Activated naive CD4-positive, alpha-beta T cell treated with anti-CD3 and anti-CD28 coated beads for 36 hours (primary cell): ENCODE measurements at regions of chr13 and their contacts with region 1.

Region 1: GRCh38 chr13:41054212-41054877 is 7.0 kb upstream of the WBP4 start:
- DNase-seq: peak; percentile 57
- H3K4me3 Mint-ChIP-seq: no peak overlapping the region
- H3K27ac Mint-ChIP-seq: no peak overlapping the region
- H3K4me1 Mint-ChIP-seq: peaks cover 65% of the 10 kb centered on the region
- H3K27me3 Mint-ChIP-seq: no peaks in the 10 kb centered on the region

Region 2: GRCh38 chr13:40974460-40975407 is 79.6 kb before region 1 on chr13:
- CTCF ChIA-PET with region 1: interaction called, 26 read pairs
- intact Hi-C with region 1: loop called (anchors 2 kb)
- DNase-seq: peak; percentile 63
- H3K4me3 Mint-ChIP-seq: peak overlapping the region; percentile 36
- H3K27ac Mint-ChIP-seq: peak overlapping the region; percentile 94
- H3K4me1 Mint-ChIP-seq: peaks cover 83% of the 10 kb centered on the region
- H3K27me3 Mint-ChIP-seq: no peaks in the 10 kb centered on the region

Region 3: DNA sequence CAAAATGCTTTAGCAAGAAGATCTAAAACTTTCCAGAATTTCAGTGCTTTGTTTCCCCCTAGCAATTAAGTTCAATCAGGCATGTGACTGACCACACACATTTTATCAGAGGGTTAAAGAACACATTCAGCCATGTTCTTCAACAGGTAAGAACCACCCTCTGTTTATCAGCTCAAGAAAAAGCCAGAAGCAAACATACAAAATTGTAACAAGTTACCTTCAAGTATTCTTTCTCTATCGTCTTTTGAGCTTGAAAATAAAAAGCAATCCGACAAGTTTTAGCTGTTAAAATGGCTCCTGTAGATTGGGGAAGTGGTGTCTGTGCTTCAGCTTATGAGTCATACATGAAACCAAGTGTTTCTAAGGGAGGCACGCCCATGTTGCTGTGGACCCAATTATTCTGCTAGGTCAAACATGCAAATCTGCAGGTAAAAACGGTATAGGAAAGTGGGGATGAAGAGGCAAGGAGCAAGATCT is 35.3 kb before region 1 on chr13 and contains the start of gene ELF1:
- CTCF ChIA-PET with region 1: interaction called, 25 read pairs
- intact Hi-C with region 1: loop called (anchors 1 kb)
- DNase-seq: peak; percentile 67
- H3K4me3 Mint-ChIP-seq: peak within 1 kb of the TSS; percentile 89
- H3K27ac Mint-ChIP-seq: peak within 1 kb of the TSS; percentile 99
- H3K4me1 Mint-ChIP-seq: peaks cover 32% of the 10 kb centered on the region
- H3K27me3 Mint-ChIP-seq: no peaks in the 10 kb centered on the region
- total RNA-seq, gene ELF1: 61.7 to 62.3 TPM

Region 4: DNA sequence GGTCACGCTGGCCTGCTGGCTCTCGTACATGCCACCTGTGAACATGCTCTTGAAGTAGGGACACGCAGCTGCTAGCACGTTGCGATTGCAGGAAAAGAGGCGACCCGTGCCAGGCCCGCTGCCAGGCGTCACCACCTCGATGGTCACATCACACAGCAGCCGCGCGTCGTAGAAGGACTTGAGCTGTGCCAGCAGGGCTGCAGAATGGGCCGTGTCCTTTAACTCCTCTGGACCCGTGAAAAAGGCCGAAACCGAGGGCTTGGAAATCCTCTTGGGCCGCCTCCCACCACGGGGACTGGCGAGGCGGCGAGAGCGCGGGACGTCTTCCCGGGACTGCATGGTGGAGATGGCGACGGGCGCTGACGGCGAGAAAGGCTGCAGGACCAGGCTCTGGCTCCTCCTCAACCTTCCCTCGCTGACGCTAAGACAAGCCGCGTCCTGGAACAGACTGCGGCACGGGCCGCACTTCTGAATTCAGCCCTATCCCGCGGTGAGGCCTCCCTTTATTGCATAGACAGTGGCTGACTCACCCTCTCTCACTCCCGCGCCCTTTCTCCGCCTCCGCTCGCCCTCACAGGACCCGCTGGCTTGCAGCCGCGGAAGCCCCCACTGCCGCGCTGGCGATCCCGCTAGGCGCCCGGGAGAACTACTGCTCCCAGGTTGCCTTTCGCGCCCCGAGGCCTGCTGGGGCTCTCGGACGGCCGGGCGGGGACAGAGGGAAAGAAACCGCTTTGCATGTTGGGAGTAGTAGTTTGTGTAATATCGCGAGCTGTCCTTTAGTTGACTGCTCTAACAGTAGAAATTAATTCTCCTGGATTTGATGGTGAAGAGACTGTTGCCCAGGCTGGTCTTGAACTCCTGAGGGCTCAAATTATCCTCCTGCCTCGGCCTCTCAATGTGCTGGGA is 139.8 kb after region 1 on chr13 and contains the start of gene KBTBD7:
- CTCF ChIA-PET with region 1: interaction called, 8 read pairs
- intact Hi-C with region 1: loop called (anchors 1 kb)
- DNase-seq: peak; percentile 95
- H3K4me3 Mint-ChIP-seq: peak within 1 kb of the TSS; percentile 90
- H3K27ac Mint-ChIP-seq: peak within 1 kb of the TSS; percentile 89
- H3K4me1 Mint-ChIP-seq: peaks cover 37% of the 10 kb centered on the region
- H3K27me3 Mint-ChIP-seq: no peaks in the 10 kb centered on the region
- total RNA-seq, gene KBTBD7: 4.2 to 4.3 TPM

Region 5: GRCh38 chr13:41652727-41653361 is 598.5 kb after region 1 on chr13:
- CTCF ChIA-PET with region 1: no interaction called
- intact Hi-C with region 1: loop called (anchors 10 kb)
- DNase-seq: peak; percentile 66
- H3K4me3 Mint-ChIP-seq: no peak overlapping the region
- H3K27ac Mint-ChIP-seq: no peak overlapping the region
- H3K4me1 Mint-ChIP-seq: peaks cover 22% of the 10 kb centered on the region
- H3K27me3 Mint-ChIP-seq: no peaks in the 10 kb centered on the region